ENCODE measurements at regions of chr4 and their contacts with region 1.

Region 1: GRCh38 chr4:13654158-13654797 is 26.8 kb upstream of the BOD1L1 start:
- DNase-seq: peak; percentile 78
- ATAC-seq: peak; percentile 90 to 96

Region 2: DNA sequence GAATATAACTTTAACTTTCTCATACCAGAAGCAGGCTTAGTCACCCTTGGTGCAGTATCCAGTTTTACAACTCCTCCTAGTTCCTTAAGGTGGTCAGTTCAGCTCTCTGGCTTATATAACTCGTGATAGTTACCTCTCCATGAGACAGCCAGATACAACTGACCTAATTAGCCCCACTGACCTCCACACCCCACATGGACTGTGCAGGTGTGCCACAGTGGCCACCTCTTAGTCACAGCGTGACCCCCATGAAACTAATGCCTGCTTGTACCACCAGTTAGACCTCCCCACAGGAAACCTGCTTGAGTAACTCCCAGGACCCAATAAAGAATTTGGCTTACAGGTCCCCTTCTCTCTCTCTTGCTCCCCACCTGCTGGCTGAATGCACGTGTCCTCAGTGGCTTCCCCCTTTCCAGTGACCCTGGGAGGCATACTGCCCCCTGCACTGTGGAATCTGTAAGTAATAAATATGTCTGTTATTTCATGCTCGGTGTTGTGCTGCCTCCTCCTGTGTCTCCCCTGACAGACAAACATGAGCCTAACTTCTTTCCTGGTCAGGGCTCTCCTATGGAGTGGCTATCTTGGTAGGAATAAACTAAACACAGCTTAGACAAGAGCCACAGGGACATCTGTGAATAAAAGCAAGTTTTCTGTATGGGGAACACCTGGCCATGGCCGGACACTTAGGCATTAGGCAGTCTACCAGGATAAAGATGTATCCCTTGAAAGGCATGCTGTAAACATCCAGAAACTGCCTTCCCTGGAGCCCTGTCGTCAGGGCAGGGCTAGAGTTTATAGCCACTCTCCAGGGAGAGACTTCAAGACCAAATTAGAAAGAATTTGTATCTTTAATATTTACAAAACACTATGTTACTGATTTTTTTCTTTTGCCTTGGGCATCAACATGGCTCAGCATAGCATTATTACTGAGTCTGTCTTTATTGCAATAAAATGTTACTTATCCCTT is 183.0 kb after region 1 on chr4:
- intact Hi-C with region 1: loop called in 1 of 2 experiments (anchors 5 kb)
- DNase-seq: no peak
- ATAC-seq: peak in 1 of 2 donors; percentile 44

Region 3: DNA sequence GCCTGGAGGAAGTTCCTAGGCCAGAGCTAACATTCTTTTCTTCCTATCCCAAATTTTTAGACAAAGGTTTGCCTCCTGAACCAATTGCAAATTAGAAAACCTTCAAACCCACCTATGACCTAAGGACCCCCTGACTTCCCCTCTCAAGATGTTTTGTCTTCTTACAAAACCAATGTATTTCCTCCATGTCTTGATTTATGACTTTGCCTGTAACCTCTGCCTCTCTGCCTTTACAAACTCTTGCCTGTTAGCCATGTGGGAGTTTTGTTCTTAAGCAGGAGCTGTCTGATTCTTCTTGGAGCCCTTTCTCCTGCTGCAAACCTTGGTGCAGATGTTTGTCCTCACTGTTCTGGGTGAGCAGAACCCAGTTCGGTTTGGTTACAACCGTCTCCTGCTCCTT is 195.5 kb after region 1 on chr4:
- intact Hi-C with region 1: loop called in 1 of 2 experiments (anchors 10 kb)
- DNase-seq: no peak
- ATAC-seq: no peak